ENCODE measurements at regions of chr5 and their contacts with region 1.

Region 1: GRCh38 chr5:140295414-140295813 is 7.5 kb downstream of the PFDN1 start:
- DNase-seq: no peak
- H3K4me3 ChIP-seq: no peak overlapping the region
- H3K4me3 Mint-ChIP-seq: peak overlapping the region in 1 of 8 donors; percentile 12
- H3K27ac ChIP-seq: no peak overlapping the region
- H3K27ac Mint-ChIP-seq: peak overlapping the region in 1 of 7 donors; percentile 22
- H3K4me1 ChIP-seq: peaks cover 31% of the 10 kb centered on the region
- H3K4me1 Mint-ChIP-seq: peaks cover 39 to 55% (median 48%) of the 10 kb centered on the region in 4 donors
- H3K27me3 ChIP-seq: no peaks in the 10 kb centered on the region
- H3K27me3 Mint-ChIP-seq: no peaks in the 10 kb centered on the region

Region 2: GRCh38 chr5:140094889-140095288 is 200.5 kb before region 1 on chr5:
- CTCF ChIA-PET with region 1: no interaction called
- POLR2A ChIA-PET with region 1: no interaction called
- intact Hi-C with region 1: no loop called
- DNase-seq: no peak
- H3K4me3 ChIP-seq: no peak overlapping the region
- H3K4me3 Mint-ChIP-seq: no peak overlapping the region
- H3K27ac ChIP-seq: no peak overlapping the region
- H3K27ac Mint-ChIP-seq: no peak overlapping the region
- H3K4me1 ChIP-seq: no peaks in the 10 kb centered on the region
- H3K4me1 Mint-ChIP-seq: no peaks in the 10 kb centered on the region
- H3K27me3 ChIP-seq: no peaks in the 10 kb centered on the region
- H3K27me3 Mint-ChIP-seq: peaks cover 13 to 16% of the 10 kb centered on the region in 2 donors

Region 3: DNA sequence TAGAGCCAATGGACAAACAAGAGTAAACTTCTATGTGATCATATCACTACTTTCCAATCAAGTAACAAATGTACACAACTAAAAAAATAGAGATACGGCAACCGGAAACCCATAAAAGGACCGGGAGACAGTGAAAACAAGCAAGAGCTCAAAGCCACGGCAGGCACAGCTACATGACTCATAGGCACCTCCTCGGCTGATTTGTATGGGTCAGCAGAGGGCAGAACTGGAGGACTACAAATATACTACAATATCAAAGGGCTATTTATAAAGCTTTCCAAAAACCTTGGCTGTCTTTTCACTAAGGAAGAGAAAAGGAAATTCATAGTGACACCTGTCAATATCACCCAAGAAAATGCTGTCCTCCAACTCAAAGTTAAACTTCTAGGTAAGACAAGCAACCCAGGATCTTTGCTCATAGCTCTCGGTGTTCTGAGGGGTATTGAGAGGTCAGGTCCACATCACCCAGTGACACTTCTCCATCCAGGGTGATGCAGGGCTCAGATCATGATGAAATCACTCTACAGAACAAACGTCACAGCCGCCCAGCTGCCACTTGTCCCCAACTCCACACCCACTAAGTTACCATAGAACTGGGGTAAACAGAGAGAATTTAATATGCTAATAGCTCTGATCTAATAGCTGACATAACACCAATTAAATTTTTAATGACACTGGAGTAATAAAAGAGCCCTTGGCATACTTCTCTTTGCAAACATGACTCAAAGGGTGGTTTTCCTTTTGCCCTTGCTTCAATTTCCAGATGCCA is 33.8 kb before region 1 on chr5:
- CTCF ChIA-PET with region 1: no interaction called
- POLR2A ChIA-PET with region 1: no interaction called
- intact Hi-C with region 1: loop called (anchors 5 kb)
- DNase-seq: peak; percentile 33 to 70 (median 51)
- H3K4me3 ChIP-seq: no peak overlapping the region
- H3K4me3 Mint-ChIP-seq: peak overlapping the region in 7 of 8 donors; percentile 28 to 74 (median 60)
- H3K27ac ChIP-seq: peak overlapping the region; percentile 38
- H3K27ac Mint-ChIP-seq: peak overlapping the region; percentile 78 to 97 (median 83)
- H3K4me1 ChIP-seq: peaks cover 70% of the 10 kb centered on the region
- H3K4me1 Mint-ChIP-seq: peaks cover 52 to 73% (median 58%) of the 10 kb centered on the region in 4 donors
- H3K27me3 ChIP-seq: no peaks in the 10 kb centered on the region
- H3K27me3 Mint-ChIP-seq: no peaks in the 10 kb centered on the region